Activated CD4-positive, alpha-beta T cell treated with anti-CD3 and anti-CD28 coated beads, Interleukin-2, amount 10 ng/mL, durations not matched to agents 7 days and 5 days (primary cell): ENCODE measurements at regions of chr19 and their contacts with region 1.

Region 1: DNA sequence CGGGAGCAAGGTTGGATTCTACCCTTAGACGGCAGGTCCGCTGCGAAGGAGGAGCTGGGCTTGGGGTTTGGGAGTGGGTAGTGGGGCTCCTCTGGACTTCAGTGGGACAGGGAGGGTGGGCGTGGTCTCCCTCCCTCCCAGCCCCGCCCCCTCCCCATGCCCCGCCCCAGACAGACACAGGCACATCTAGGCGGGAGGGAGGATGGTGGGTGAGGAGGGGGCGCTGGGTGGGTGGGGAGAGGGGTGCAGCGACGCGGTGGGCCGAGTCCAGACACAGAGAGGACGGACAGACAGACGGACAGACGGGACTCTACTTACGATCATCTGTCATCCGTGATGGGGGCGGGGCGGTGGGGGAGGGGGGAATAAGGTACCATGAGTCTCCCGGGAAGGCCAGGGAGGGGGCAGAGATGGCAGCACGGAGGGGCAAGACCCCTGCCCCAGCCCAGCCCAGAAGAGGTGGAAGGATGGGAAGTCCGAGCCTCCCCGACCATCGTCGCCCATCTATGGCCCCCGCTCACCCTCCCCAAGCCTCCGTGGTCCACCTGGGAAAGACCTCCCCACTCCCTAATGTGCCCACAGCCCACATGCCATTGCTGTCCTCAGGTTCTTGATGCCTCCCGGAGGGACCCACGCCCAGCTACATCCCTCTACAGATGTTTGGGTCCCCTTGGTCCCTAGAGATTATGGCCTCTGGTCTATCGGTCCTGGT is 64.8 kb downstream of the UNC13A start:
- DNase-seq: no peak
- H3K4me3 Mint-ChIP-seq: no peak overlapping the region
- H3K27ac Mint-ChIP-seq: no peak overlapping the region
- H3K4me1 Mint-ChIP-seq: peaks cover 10% of the 10 kb centered on the region
- H3K27me3 Mint-ChIP-seq: peaks cover 7% of the 10 kb centered on the region

Region 2: GRCh38 chr19:17605761-17606745 is 17.3 kb before region 1 on chr19:
- CTCF ChIA-PET with region 1: interaction called, 19 read pairs
- POLR2A ChIA-PET with region 1: no interaction called
- DNase-seq: peak; percentile 77
- H3K4me3 Mint-ChIP-seq: peak overlapping the region; percentile 68
- H3K27ac Mint-ChIP-seq: peak overlapping the region; percentile 75
- H3K4me1 Mint-ChIP-seq: peaks cover 11% of the 10 kb centered on the region
- H3K27me3 Mint-ChIP-seq: peaks cover 35% of the 10 kb centered on the region